HCT116 (cell line): ENCODE measurements at regions of chr9 and their contacts with region 1.

Region 1: GRCh38 chr9:96884438-96884837 is 30.1 kb upstream of the ZNF782 start:
- DNase-seq: peak; percentile 92
- ATAC-seq: peak; percentile 100
- H3K4me3 ChIP-seq: peak overlapping the region in 1 of 2 experiments; percentile 39; a peak in 2 of 4 replicates
- H3K27ac ChIP-seq: peak overlapping the region; percentile 35; the same call in 1 of the 2 replicates
- H3K4me1 ChIP-seq: peaks cover 14 to 25% of the 10 kb centered on the region in 2 experiments
- H3K27me3 ChIP-seq: no peaks in the 10 kb centered on the region
- CTCF ChIP-seq: no peak
- POLR2A ChIP-seq: no peak
- RAD21 ChIP-seq: peak; percentile 0

Region 2: DNA sequence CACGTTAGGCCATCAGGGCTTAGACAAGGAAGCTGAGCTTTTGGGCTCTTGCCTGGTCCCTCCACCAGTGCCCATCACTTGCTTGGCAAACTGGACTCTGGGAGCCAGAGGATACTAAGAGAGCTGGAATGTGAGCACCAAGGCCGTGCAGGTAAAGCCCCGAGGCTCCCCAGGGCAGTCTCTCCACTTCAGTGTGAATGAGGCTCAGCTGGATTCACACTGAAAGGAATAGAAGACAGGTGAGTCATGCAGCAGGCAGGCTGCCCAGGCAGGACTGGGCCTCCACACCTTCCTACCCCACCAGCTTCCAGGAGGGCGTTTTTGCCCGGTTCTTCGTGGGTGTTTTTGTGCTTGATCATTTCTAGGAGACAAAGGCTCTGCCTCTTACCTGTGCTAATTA is 161.8 kb after region 1 on chr9:
- CTCF ChIA-PET with region 1: no interaction called
- POLR2A ChIA-PET with region 1: no interaction called
- RAD21 ChIA-PET with region 1: no interaction called
- intact Hi-C with region 1: loop called (anchors 10 kb)
- DNase-seq: peak; percentile 83
- ATAC-seq: peak; percentile 99
- H3K4me3 ChIP-seq: peak overlapping the region in 1 of 2 experiments; percentile 23; a peak in 1 of 4 replicates
- H3K27ac ChIP-seq: peak overlapping the region; percentile 46; the same call in 1 of the 2 replicates
- H3K4me1 ChIP-seq: peaks cover 20 to 25% of the 10 kb centered on the region in 2 experiments
- H3K27me3 ChIP-seq: no peaks in the 10 kb centered on the region
- CTCF ChIP-seq: no peak
- POLR2A ChIP-seq: no peak
- RAD21 ChIP-seq: no peak; the same call in 1 of the 2 replicates